Activated T-helper 2 cell treated with anti-CD3 and anti-CD28 coated beads, Interferon-gamma antibody, Interleukin-2, Interleukin-4, amounts not matched to agents 10 μg/mL and 5 μg/mL and 100 μg/mL, durations not matched to agents 14 hours and 24 hours and 36 hours (primary cell): ENCODE measurements at regions of chr15 and their contacts with region 1.

Region 1: DNA sequence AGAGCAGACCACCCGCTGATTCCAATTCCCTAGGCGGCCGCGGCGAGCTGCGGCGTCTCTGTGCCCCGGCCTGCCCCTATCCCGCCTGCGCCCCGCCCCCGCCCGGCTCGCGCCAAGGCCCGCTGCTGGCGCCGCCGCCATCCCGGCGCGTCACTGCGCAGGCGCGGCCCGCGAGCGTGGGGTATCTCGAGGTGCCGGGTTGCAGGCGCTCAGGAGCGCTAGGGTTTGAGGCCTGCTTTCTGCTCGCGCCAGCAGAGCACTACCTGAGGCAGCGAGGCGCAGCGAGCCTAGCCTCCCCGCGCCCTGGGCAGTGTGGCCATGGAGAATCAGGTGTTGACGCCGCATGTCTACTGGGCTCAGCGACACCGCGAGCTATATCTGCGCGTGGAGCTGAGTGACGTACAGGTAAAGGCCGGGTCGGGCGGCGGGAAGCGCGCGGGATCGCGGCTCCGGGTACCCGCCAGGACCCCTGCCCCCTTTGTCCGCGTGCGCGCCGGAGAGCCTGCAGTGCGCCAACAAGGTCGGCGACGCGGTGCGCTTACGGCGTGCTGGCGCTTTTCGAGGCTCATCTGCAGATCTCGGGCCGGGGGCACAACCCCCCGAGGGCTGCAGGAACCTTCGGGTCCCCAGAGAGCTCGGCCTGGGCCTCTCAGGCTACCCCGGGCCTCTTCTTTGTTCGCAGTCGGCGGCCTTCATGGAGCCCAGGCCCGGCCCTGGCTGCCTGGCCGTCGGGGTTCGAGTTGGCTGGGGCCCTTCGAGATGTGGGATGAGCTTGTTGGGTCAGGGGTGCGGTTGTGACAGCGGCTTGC is at the start of gene HACD3:
- DNase-seq: peak; percentile 84
- H3K4me3 Mint-ChIP-seq: peak within 1 kb of the TSS; percentile 87
- H3K27ac Mint-ChIP-seq: peak within 1 kb of the TSS; percentile 86
- H3K4me1 Mint-ChIP-seq: peaks cover 31% of the 10 kb centered on the region
- H3K27me3 Mint-ChIP-seq: no peaks in the 10 kb centered on the region
- total RNA-seq, gene HACD3: 39.1 and 39.8 TPM in 2 replicates

Region 2: GRCh38 chr15:65516997-65517865 is 13.3 kb before region 1 on chr15 and contains the start of gene DPP8:
- intact Hi-C with region 1: loop called (anchors 1 kb)
- DNase-seq: peak; percentile 93
- H3K4me3 Mint-ChIP-seq: peak within 1 kb of the TSS; percentile 99
- H3K27ac Mint-ChIP-seq: peak within 1 kb of the TSS; percentile 94
- H3K4me1 Mint-ChIP-seq: peaks cover 21% of the 10 kb centered on the region
- H3K27me3 Mint-ChIP-seq: no peaks in the 10 kb centered on the region
- total RNA-seq, gene DPP8: 32.3 and 33.8 TPM in 2 replicates

Region 3: GRCh38 chr15:65610871-65611718 is 80.6 kb after region 1 on chr15 and contains the start of gene INTS14:
- intact Hi-C with region 1: loop called (anchors 1 kb)
- DNase-seq: peak; percentile 88
- H3K4me3 Mint-ChIP-seq: peak within 1 kb of the TSS; percentile 95
- H3K27ac Mint-ChIP-seq: peak within 1 kb of the TSS; percentile 92
- H3K4me1 Mint-ChIP-seq: peaks cover 23% of the 10 kb centered on the region
- H3K27me3 Mint-ChIP-seq: no peaks in the 10 kb centered on the region
- total RNA-seq, gene INTS14: 45.4 and 47.8 TPM in 2 replicates

Region 4: GRCh38 chr15:65869127-65869953 is 338.8 kb after region 1 on chr15 and contains the start of gene RAB11A:
- intact Hi-C with region 1: loop called (anchors 10 kb)
- DNase-seq: peak; percentile 94
- H3K4me3 Mint-ChIP-seq: peak within 1 kb of the TSS; percentile 89
- H3K27ac Mint-ChIP-seq: peak within 1 kb of the TSS; percentile 84
- H3K4me1 Mint-ChIP-seq: peaks cover 19% of the 10 kb centered on the region
- H3K27me3 Mint-ChIP-seq: no peaks in the 10 kb centered on the region
- total RNA-seq, gene RAB11A: 153 and 155 TPM in 2 replicates